Activated naive CD4-positive, alpha-beta T cell treated with anti-CD3 and anti-CD28 coated beads for 36 hours (primary cell): ENCODE measurements at regions of chr10 and their contacts with region 1.

Region 1: GRCh38 chr10:35635576-35635975 is 6.5 kb downstream of the FZD8 start:
- DNase-seq: peak; percentile 63
- H3K4me3 Mint-ChIP-seq: no peak overlapping the region
- H3K27ac Mint-ChIP-seq: no peak overlapping the region
- H3K4me1 Mint-ChIP-seq: peaks cover 7% of the 10 kb centered on the region
- H3K27me3 Mint-ChIP-seq: peaks cover 45% of the 10 kb centered on the region

Region 2: GRCh38 chr10:35355971-35356724 is 279.4 kb before region 1 on chr10:
- CTCF ChIA-PET with region 1: no interaction called
- intact Hi-C with region 1: no loop called
- DNase-seq: peak; percentile 31
- H3K4me3 Mint-ChIP-seq: peak overlapping the region; percentile 8
- H3K27ac Mint-ChIP-seq: peak overlapping the region; percentile 68
- H3K4me1 Mint-ChIP-seq: peaks cover 71% of the 10 kb centered on the region
- H3K27me3 Mint-ChIP-seq: no peaks in the 10 kb centered on the region

Region 3: GRCh38 chr10:35540296-35541164 is 95.0 kb before region 1 on chr10:
- CTCF ChIA-PET with region 1: no interaction called
- intact Hi-C with region 1: no loop called
- DNase-seq: no peak
- H3K4me3 Mint-ChIP-seq: no peak overlapping the region
- H3K27ac Mint-ChIP-seq: no peak overlapping the region
- H3K4me1 Mint-ChIP-seq: peaks cover 12% of the 10 kb centered on the region
- H3K27me3 Mint-ChIP-seq: no peaks in the 10 kb centered on the region

Region 4: DNA sequence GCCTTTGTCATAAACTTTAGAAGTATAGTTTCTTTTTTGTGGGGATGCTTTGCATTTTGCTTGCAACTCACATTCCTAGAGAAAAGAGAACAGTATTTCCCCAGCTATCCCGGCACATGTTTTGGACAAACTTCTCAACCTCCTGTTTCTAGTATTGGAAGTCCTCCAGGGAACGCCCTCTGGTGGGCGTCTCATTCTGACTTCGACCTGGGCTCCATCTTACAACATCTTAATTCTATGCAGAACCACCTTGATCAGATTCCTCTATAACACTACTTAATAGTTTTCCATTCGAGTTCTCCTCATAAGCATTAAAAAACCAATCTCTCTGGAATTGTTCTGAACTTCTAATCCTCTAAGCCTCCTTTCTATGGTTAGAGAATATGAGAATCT is 146.1 kb after region 1 on chr10:
- CTCF ChIA-PET with region 1: interaction called, 7 read pairs
- intact Hi-C with region 1: loop called (anchors 1 kb)
- DNase-seq: peak; percentile 14
- H3K4me3 Mint-ChIP-seq: no peak overlapping the region
- H3K27ac Mint-ChIP-seq: no peak overlapping the region
- H3K4me1 Mint-ChIP-seq: no peaks in the 10 kb centered on the region
- H3K27me3 Mint-ChIP-seq: peaks cover 12% of the 10 kb centered on the region

Region 5: GRCh38 chr10:35916791-35917190 is 281.2 kb after region 1 on chr10:
- CTCF ChIA-PET with region 1: interaction called, 4 read pairs
- intact Hi-C with region 1: loop called (anchors 1 kb)
- DNase-seq: no peak
- H3K4me3 Mint-ChIP-seq: no peak overlapping the region
- H3K27ac Mint-ChIP-seq: no peak overlapping the region
- H3K4me1 Mint-ChIP-seq: no peaks in the 10 kb centered on the region
- H3K27me3 Mint-ChIP-seq: peaks cover 4% of the 10 kb centered on the region

Region 6: GRCh38 chr10:36779234-36779846 is 1143.8 kb after region 1 on chr10:
- CTCF ChIA-PET with region 1: interaction called, 3 read pairs
- intact Hi-C with region 1: loop called (anchors 2 kb)
- DNase-seq: no peak
- H3K4me3 Mint-ChIP-seq: no peak overlapping the region
- H3K27ac Mint-ChIP-seq: no peak overlapping the region
- H3K4me1 Mint-ChIP-seq: no peaks in the 10 kb centered on the region
- H3K27me3 Mint-ChIP-seq: no peaks in the 10 kb centered on the region

Region 7: GRCh38 chr10:36880898-36881297 is 1245.3 kb after region 1 on chr10:
- CTCF ChIA-PET with region 1: interaction called, 13 read pairs
- intact Hi-C with region 1: loop called (anchors 1 kb)
- DNase-seq: no peak
- H3K4me3 Mint-ChIP-seq: no peak overlapping the region
- H3K27ac Mint-ChIP-seq: no peak overlapping the region
- H3K4me1 Mint-ChIP-seq: no peaks in the 10 kb centered on the region
- H3K27me3 Mint-ChIP-seq: peaks cover 5% of the 10 kb centered on the region

Region 8: DNA sequence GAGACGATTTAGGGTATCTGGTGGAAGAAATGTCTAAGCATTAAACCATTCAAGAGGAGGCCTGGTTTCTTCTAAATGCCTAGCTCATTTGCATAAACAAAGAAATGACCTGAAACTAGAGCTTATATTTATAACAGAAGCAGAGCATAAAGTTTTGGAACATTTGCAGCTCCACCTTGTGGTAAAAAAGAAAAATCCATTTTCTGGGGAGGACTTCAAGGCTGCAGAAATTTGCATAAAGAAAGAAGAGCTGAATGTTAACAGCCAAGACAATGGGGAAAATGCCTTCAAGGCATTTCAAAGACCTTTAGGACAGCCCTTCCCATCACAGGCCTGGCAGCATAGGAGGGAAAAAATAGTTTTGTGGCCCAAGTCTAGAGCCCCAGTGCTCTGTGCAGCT is 1859.8 kb after region 1 on chr10:
- CTCF ChIA-PET with region 1: interaction called, 3 read pairs
- intact Hi-C with region 1: loop called (anchors 10 kb)
- DNase-seq: no peak
- H3K4me3 Mint-ChIP-seq: no peak overlapping the region
- H3K27ac Mint-ChIP-seq: no peak overlapping the region
- H3K4me1 Mint-ChIP-seq: no peaks in the 10 kb centered on the region
- H3K27me3 Mint-ChIP-seq: no peaks in the 10 kb centered on the region